Left ventricle myocardium inferior (tissue), 1 donor: ENCODE measurements at regions of chr4 and their contacts with region 1.

Region 1: GRCh38 chr4:87353592-87353991 is 30.9 kb upstream of the HSD17B13 start:
- DNase-seq: no peak
- H3K4me3 ChIP-seq: no peak overlapping the region
- H3K27ac ChIP-seq: peak overlapping the region; percentile 54
- H3K4me1 ChIP-seq: peaks cover 14% of the 10 kb centered on the region
- H3K27me3 ChIP-seq: no peaks in the 10 kb centered on the region
- CTCF ChIP-seq: peak; percentile 66

Region 2: DNA sequence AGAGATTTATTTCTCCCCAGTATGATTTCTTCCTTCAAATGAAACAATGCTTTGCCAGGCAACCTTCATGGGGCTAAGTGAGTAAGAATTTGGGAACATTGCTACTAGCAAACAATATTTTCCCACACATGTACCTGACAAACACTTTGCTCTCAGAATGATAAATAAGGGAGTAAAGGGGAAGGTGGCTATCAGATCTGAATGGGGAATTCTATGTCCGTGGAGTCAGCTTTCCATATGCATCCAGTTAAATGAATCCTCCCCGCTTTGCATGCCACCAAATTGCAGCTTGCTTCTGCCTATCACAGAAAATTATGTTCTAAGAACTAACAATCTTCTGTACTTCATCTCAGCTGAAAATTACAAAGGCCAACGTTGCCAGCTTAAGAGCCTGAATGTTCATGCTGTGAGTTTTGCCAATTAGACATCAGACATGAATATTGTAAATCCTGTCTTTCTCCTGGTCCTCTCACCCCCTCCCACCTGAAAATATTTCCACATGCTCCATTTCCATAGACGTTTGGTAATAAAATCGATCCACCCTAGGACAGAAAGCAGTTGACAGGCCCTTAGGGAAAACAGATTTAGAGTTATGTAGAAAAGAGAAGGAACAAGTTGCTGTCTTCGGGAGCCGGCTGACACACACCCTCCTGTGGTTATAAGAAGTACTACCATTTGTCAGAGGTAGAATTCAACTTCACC is 485.4 kb after region 1 on chr4:
- intact Hi-C with region 1: loop called (anchors 10 kb)
- DNase-seq: peak; percentile 16
- H3K4me3 ChIP-seq: no peak overlapping the region
- H3K27ac ChIP-seq: peak overlapping the region; percentile 30
- H3K4me1 ChIP-seq: peaks cover 11% of the 10 kb centered on the region
- H3K27me3 ChIP-seq: no peaks in the 10 kb centered on the region
- CTCF ChIP-seq: peak; percentile 87